Activated CD4-positive, alpha-beta T cell treated with anti-CD3 and anti-CD28 coated beads for 36 hours (primary cell): ENCODE measurements at regions of chr19 and their contacts with region 1.

Region 1: GRCh38 chr19:33521480-33522370 is at the start of gene PEPD:
- DNase-seq: peak; percentile 95
- ATAC-seq: peak; percentile 97
- H3K4me3 Mint-ChIP-seq: peak within 1 kb of the TSS; percentile 89
- H3K27ac Mint-ChIP-seq: peak within 1 kb of the TSS; percentile 60
- H3K4me1 Mint-ChIP-seq: peaks cover 20% of the 10 kb centered on the region
- H3K27me3 Mint-ChIP-seq: no peaks in the 10 kb centered on the region
- total RNA-seq, gene PEPD: 26.9 to 37.4 TPM

Region 2: GRCh38 chr19:34134190-34135053 is 612.7 kb after region 1 on chr19:
- CTCF ChIA-PET with region 1: no interaction called
- POLR2A ChIA-PET with region 1: no interaction called
- intact Hi-C with region 1: loop called in 1 of 2 experiments (anchors 1 kb)
- DNase-seq: peak; percentile 94
- ATAC-seq: peak; percentile 94
- H3K4me3 Mint-ChIP-seq: peak overlapping the region; percentile 92
- H3K27ac Mint-ChIP-seq: peak overlapping the region; percentile 95
- H3K4me1 Mint-ChIP-seq: peaks cover 9% of the 10 kb centered on the region
- H3K27me3 Mint-ChIP-seq: no peaks in the 10 kb centered on the region

Region 3: DNA sequence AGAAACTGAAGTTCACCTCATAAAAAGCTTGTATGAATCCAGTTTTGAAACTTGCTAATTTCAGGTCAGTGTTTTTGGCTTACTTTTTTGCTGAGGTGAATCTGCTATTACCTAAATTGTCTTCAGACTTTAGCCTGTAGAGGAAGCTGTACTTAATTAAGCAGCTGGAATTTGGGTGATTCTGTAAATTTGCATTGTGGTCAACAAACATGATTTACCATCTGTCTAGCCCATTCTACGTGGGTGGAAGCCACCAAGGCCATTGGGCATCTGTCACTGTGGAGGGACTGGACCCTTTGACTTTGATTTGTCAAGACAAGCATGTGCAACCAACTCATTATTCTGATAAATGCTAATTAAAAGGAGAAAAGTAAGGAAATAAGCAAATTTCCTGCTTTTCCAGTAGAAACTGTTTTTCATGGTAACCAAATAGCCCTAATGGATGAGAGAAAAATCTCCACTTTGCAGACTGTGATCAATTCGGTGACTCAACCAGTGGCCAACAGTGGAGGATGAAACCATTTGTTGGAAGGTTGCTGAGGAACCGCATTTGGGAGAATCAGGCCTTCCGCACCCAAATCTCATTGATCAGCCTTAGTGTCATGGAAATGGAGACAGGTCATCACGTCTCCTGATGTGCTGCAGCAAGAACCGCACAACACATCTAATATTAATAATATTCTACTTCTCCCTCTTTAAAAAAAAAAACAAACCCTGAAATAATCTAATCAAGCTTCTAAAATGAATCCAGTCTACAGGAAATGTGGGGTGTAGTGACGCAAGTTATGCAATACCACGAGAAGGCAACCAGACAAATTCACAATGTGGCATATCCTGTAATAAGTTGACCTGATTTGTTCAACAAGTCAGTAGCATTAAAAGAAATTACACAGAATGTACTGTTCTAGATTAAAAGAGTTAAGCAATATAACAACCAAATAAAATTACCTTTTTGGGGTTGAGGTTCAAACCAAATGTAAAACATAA is 786.9 kb after region 1 on chr19:
- CTCF ChIA-PET with region 1: no interaction called
- POLR2A ChIA-PET with region 1: no interaction called
- intact Hi-C with region 1: loop called in 1 of 2 experiments (anchors 5 kb)
- DNase-seq: peak; percentile 32
- ATAC-seq: peak; percentile 21
- H3K4me3 Mint-ChIP-seq: peak overlapping the region; percentile 20
- H3K27ac Mint-ChIP-seq: peak overlapping the region; percentile 90
- H3K4me1 Mint-ChIP-seq: peaks cover 69% of the 10 kb centered on the region
- H3K27me3 Mint-ChIP-seq: no peaks in the 10 kb centered on the region